Activated T-helper 2 cell treated with anti-CD3 and anti-CD28 coated beads, Interferon-gamma antibody, Interleukin-2, Interleukin-4, amounts not matched to agents 10 μg/mL and 5 μg/mL and 100 μg/mL, durations not matched to agents 14 hours and 24 hours and 36 hours (primary cell): ENCODE measurements at regions of chr6 and their contacts with region 1.

Region 1: GRCh38 chr6:15901141-15902115 is 227.5 kb upstream of the MYLIP start:
- DNase-seq: peak; percentile 64
- H3K4me3 Mint-ChIP-seq: peak overlapping the region; percentile 24
- H3K27ac Mint-ChIP-seq: peak overlapping the region; percentile 99
- H3K4me1 Mint-ChIP-seq: peaks cover 69% of the 10 kb centered on the region
- H3K27me3 Mint-ChIP-seq: no peaks in the 10 kb centered on the region

Region 2: GRCh38 chr6:15735567-15736265 is 165.7 kb before region 1 on chr6:
- intact Hi-C with region 1: loop called (anchors 1 kb)
- DNase-seq: no peak
- H3K4me3 Mint-ChIP-seq: peak overlapping the region; percentile 59
- H3K27ac Mint-ChIP-seq: peak overlapping the region; percentile 83
- H3K4me1 Mint-ChIP-seq: peaks cover 54% of the 10 kb centered on the region
- H3K27me3 Mint-ChIP-seq: no peaks in the 10 kb centered on the region

Region 3: DNA sequence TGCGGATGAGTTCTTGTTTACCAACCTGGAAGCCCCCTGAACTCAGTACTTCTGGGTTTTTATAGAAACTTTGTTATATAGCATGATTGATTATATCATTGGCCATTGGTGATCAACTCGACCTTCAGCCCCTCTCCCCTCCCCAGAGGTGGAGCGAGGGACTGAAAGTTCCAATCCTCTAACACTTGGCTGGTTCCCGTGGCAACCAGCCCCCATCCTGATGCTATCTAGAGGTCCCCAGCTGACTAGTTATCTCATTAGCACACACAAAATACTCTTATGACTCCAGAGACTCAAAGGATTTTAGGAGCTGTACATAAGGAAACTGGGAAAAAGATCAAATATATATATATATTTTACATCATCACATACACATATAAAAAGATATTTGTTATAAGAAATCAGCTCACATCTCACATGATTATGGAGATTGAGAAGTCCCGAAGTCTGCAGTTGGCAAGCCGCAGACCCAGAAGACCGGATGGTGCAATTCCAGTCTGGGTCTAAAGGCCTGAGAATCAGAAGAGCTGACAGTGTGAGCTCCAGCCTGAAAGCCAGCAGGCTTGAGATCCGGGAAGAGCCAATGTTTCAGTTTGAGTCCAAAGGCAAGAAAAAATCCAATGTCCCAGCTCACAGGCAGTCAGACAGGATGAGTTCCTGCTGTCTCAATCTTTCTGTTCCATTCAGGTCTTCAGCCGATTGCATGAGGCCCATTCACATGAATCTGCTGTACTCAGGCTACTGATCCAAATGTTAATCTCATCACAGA is 59.3 kb before region 1 on chr6:
- intact Hi-C with region 1: loop called (anchors 5 kb)
- DNase-seq: no peak
- H3K4me3 Mint-ChIP-seq: no peak overlapping the region
- H3K27ac Mint-ChIP-seq: peak overlapping the region; percentile 63
- H3K4me1 Mint-ChIP-seq: peaks cover 39% of the 10 kb centered on the region
- H3K27me3 Mint-ChIP-seq: no peaks in the 10 kb centered on the region

Region 4: DNA sequence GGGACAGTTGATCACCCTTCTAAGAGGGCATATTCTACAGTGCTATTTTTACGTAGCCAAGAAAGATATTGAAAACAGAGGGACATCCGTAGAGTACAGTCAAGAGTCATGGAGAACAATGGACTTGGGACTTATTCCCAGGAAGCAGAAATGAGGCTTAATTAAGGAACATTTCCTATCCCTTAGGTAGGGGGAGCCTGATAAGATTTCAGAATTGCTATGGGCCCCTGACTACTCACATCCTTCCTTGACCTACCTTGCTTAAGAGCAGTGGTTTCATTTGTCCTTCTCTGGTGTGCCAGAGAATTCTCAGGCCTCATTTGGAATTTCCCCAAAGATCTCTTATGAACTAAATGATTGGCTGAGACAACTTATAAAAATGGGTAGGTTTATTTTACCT is 49.1 kb before region 1 on chr6:
- intact Hi-C with region 1: no loop called
- DNase-seq: no peak
- H3K4me3 Mint-ChIP-seq: no peak overlapping the region
- H3K27ac Mint-ChIP-seq: no peak overlapping the region
- H3K4me1 Mint-ChIP-seq: peaks cover 14% of the 10 kb centered on the region
- H3K27me3 Mint-ChIP-seq: no peaks in the 10 kb centered on the region

Region 5: DNA sequence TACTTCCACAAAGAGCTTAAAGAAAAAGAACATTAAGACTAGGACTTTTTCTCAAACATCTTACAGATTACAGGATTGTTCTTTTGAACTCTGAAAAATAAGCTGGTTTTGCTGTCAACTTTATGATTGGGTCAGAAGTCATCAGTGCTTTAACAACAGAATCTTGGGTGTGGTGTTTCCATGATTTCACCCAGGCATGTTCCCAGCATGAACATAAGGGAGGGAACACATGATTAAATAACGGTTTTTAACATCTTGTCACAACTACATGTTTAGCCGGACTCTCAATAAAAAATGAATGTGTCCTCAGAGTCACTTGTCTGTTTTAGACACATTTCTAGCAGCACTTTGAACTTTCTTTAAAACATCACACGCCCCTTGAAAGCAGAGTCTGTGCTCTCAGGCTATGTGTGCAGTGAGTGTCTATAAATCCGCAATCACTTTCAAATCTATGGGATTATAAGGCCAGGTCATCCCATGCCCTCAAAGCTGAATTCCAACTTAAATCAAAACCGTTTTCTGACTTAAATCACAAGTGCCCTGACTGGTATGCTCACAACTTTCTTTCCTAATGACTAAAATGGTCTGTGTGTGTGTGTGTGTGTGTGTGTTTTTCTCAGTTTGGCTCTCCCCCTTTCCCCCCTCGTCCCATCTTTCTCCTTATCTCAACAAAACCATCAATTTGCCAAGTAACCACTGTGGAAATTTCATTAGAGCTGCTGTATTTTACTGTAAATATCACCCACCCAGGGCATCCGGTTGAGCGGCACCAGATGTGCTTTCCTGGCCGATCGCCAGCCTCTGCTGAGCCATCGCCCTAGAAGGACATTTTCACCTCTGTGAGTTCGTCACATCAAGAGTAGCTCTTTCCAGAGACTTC is 21.8 kb before region 1 on chr6:
- intact Hi-C with region 1: loop called (anchors 1 kb)
- DNase-seq: peak; percentile 29
- H3K4me3 Mint-ChIP-seq: no peak overlapping the region
- H3K27ac Mint-ChIP-seq: peak overlapping the region; percentile 68
- H3K4me1 Mint-ChIP-seq: peaks cover 49% of the 10 kb centered on the region
- H3K27me3 Mint-ChIP-seq: no peaks in the 10 kb centered on the region

Region 6: GRCh38 chr6:15955944-15956735 is 54.7 kb after region 1 on chr6:
- intact Hi-C with region 1: no loop called
- DNase-seq: no peak
- H3K4me3 Mint-ChIP-seq: no peak overlapping the region
- H3K27ac Mint-ChIP-seq: no peak overlapping the region
- H3K4me1 Mint-ChIP-seq: peaks cover 48% of the 10 kb centered on the region
- H3K27me3 Mint-ChIP-seq: no peaks in the 10 kb centered on the region

Region 7: DNA sequence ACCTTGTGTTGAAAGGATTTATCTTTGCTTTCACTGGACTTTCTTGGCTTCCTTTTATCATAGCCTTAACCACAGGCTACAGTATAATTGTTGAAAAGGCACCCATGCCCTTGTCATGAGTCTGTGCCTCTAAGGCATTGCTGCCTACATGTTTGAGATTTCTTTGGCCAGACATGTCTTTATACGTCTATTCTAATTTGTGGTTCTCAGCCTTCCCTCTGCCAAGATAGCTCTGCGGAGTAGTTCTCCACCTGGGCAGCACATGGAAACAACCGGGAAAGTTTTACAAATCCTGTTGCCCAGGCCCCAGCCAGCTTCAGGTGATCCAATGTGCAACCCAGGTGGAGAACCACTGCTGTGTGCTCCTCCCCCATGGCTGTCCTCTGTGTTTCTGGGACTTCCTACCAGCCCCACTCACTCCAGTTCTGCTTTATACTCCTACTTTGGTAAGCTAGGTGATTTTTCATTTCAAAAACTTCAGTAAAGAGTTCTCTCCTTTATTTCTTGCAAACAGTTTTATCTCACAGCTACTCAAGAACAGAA is 67.9 kb after region 1 on chr6:
- intact Hi-C with region 1: no loop called
- DNase-seq: no peak
- H3K4me3 Mint-ChIP-seq: no peak overlapping the region
- H3K27ac Mint-ChIP-seq: no peak overlapping the region
- H3K4me1 Mint-ChIP-seq: no peaks in the 10 kb centered on the region
- H3K27me3 Mint-ChIP-seq: no peaks in the 10 kb centered on the region

Region 8: GRCh38 chr6:16206595-16207037 is 305.2 kb after region 1 on chr6:
- intact Hi-C with region 1: no loop called
- DNase-seq: peak; percentile 23
- H3K4me3 Mint-ChIP-seq: no peak overlapping the region
- H3K27ac Mint-ChIP-seq: no peak overlapping the region
- H3K4me1 Mint-ChIP-seq: peaks cover 10% of the 10 kb centered on the region
- H3K27me3 Mint-ChIP-seq: peaks cover 28% of the 10 kb centered on the region